ENCODE measurements at regions of chr5 and their contacts with region 1.

Region 1: GRCh38 chr5:72955768-72956323 is at the start of gene FCHO2:
- DNase-seq: peak; percentile 97
- H3K4me3 ChIP-seq: peak within 1 kb of the TSS; percentile 53 to 82 (median 77)
- H3K27ac ChIP-seq: peak within 1 kb of the TSS; percentile 98
- H3K4me1 ChIP-seq: peaks cover 24% of the 10 kb centered on the region
- H3K27me3 ChIP-seq: no peaks in the 10 kb centered on the region
- CTCF ChIP-seq: peak; percentile 58 to 85
- total RNA-seq, gene FCHO2: 15.5 to 25.5 TPM

Region 2: GRCh38 chr5:72448368-72448767 is 507.5 kb before region 1 on chr5:
- CTCF ChIA-PET with region 1: interaction called, 46 read pairs
- dilution Hi-C with region 1: no loop called
- in situ Hi-C with region 1: no loop called
- intact Hi-C with region 1: no loop called
- DNase-seq: no peak
- H3K4me3 ChIP-seq: no peak overlapping the region
- H3K27ac ChIP-seq: no peak overlapping the region
- H3K4me1 ChIP-seq: peaks cover 15% of the 10 kb centered on the region
- H3K27me3 ChIP-seq: no peaks in the 10 kb centered on the region
- CTCF ChIP-seq: no peak

Region 3: DNA sequence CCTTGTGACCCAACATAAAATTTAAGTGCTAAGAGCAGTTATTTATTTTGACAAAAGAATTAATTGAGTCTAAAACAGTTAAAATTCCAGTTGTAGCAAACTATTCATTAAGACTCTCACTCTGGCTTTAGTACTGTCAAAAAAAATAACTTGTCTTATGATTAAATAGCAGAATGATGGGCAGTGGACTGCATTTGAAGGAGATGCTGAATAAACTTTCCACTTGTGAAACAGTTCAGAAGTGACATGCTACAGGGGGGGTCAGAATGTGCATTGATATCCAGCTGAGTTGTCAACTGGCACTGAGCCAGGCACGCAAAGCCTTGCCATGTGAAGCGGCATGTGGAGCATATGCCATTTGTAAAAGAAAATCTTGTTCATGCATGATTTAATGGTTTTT is 76.0 kb after region 1 on chr5:
- CTCF ChIA-PET with region 1: no interaction called
- dilution Hi-C with region 1: no loop called
- in situ Hi-C with region 1: no loop called
- intact Hi-C with region 1: loop called (anchors 2 kb)
- DNase-seq: peak; percentile 53
- H3K4me3 ChIP-seq: no peak overlapping the region
- H3K27ac ChIP-seq: peak overlapping the region; percentile 84
- H3K4me1 ChIP-seq: peaks cover 31% of the 10 kb centered on the region
- H3K27me3 ChIP-seq: no peaks in the 10 kb centered on the region
- CTCF ChIP-seq: no peak

Region 4: GRCh38 chr5:73081093-73081492 is 125.2 kb after region 1 on chr5:
- CTCF ChIA-PET with region 1: no interaction called
- dilution Hi-C with region 1: no loop called
- in situ Hi-C with region 1: no loop called
- intact Hi-C with region 1: loop called (anchors 5 kb)
- DNase-seq: no peak
- H3K4me3 ChIP-seq: no peak overlapping the region
- H3K27ac ChIP-seq: no peak overlapping the region
- H3K4me1 ChIP-seq: no peaks in the 10 kb centered on the region
- H3K27me3 ChIP-seq: no peaks in the 10 kb centered on the region
- CTCF ChIP-seq: no peak

Region 5: DNA sequence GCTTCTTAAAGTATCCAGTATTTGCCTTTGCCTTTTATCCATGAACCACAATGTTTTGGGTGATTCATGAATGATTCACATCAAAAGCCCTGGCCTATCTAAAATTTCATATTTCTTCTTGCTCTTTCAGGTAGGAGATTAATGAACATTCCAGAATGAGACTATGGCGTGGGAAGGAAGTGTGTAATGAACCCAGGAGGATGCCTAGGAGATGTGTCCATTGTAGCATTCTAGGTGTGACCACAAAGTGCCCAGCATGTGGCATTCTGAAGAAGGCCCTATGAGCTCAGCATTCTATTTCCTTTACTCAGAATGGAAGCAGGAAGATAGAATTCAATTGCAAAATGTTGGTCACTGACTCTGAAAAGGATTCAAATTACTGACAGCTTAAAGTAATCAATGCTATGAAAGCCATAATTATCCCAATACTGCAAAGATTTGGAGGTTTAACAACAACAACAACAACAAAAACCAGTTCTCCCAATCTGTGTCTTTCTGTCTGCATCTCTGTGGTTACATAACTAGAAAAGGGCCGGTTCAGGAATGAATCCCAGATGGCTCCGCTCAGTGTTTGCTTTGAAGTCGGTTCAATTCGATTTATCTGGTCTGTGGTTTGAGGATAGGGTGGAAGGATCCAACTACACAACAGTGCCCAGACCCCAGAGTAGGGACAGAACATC is 366.1 kb after region 1 on chr5:
- CTCF ChIA-PET with region 1: no interaction called
- dilution Hi-C with region 1: no loop called
- in situ Hi-C with region 1: no loop called
- intact Hi-C with region 1: loop called (anchors 10 kb)
- DNase-seq: peak; percentile 99
- H3K4me3 ChIP-seq: no peak overlapping the region
- H3K27ac ChIP-seq: peak overlapping the region; percentile 70
- H3K4me1 ChIP-seq: peaks cover 24% of the 10 kb centered on the region
- H3K27me3 ChIP-seq: no peaks in the 10 kb centered on the region
- CTCF ChIP-seq: no peak

Region 6: DNA sequence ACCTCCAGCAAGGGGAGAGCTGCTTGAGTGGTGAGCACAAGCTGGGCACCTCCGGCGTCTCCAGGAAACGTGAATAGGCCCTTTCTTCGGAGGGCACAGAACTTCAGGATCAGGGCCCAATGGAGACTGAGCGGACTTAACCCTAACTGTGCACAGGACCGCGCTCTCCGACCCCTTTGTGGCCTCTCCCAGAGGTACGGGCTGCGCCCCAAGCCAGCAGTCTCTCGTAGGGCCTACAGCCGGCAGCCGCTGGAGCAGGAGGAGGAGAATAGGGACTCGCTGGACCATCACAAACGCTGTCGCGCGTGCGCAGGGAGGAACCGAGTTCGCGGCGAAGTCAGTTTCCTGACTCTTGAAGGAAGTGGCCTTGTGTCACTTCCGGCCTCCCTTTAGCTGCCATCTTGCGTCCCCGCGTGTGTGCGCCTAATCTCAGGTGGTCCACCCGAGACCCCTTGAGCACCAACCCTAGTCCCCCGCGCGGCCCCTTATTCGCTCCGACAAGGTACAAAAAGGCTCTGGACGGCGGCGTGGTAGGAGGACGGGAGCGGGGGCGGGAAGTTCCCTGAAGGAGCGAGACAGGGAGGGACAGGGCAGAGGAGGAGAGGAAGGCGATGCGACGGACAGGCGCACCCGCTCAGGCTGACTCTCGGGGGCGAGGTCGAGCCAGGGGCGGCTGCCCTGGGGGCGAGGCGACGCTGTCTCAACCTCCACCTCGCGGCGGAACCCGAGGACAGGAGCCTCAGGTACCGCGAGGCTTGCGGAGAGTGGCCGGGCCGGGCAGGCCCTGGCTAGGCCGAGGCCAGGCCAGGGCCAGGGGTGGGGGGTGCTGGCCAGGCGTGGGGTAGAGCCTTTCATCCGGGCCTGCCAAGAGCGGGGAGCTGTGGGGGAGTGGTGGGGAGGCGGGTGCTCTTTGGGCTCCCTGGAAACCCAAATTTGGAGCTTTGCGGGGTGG is 542.5 kb after region 1 on chr5 and contains the start of gene BTF3:
- CTCF ChIA-PET with region 1: no interaction called
- dilution Hi-C with region 1: no loop called
- in situ Hi-C with region 1: no loop called
- intact Hi-C with region 1: loop called (anchors 2 kb)
- DNase-seq: peak; percentile 96
- H3K4me3 ChIP-seq: peak within 1 kb of the TSS; percentile 90 to 97 (median 92)
- H3K27ac ChIP-seq: peak within 1 kb of the TSS; percentile 95
- H3K4me1 ChIP-seq: peaks cover 8% of the 10 kb centered on the region
- H3K27me3 ChIP-seq: no peaks in the 10 kb centered on the region
- CTCF ChIP-seq: no peak
- total RNA-seq, gene BTF3: 365 to 681 TPM